ENCODE measurements at regions of chr14 and their contacts with region 1.

Region 1: GRCh38 chr14:75109877-75110276 is 17.0 kb downstream of the NEK9 start:
- DNase-seq: no peak
- ATAC-seq: no peak
- H3K4me3 ChIP-seq: no peak overlapping the region
- H3K4me3 Mint-ChIP-seq: no peak overlapping the region
- H3K27ac ChIP-seq: no peak overlapping the region
- H3K27ac Mint-ChIP-seq: no peak overlapping the region
- H3K4me1 ChIP-seq: peaks cover 8% of the 10 kb centered on the region
- H3K4me1 Mint-ChIP-seq: peaks cover 13% of the 10 kb centered on the region
- H3K27me3 ChIP-seq: no peaks in the 10 kb centered on the region
- H3K27me3 Mint-ChIP-seq: no peaks in the 10 kb centered on the region
- CTCF ChIP-seq: no peak

Region 2: GRCh38 chr14:74720526-74720925 is 389.4 kb before region 1 on chr14:
- CTCF ChIA-PET with region 1: no interaction called
- POLR2A ChIA-PET with region 1: no interaction called
- intact Hi-C with region 1: no loop called
- DNase-seq: no peak
- ATAC-seq: no peak
- H3K4me3 ChIP-seq: no peak overlapping the region
- H3K4me3 Mint-ChIP-seq: no peak overlapping the region
- H3K27ac ChIP-seq: no peak overlapping the region
- H3K27ac Mint-ChIP-seq: no peak overlapping the region
- H3K4me1 ChIP-seq: no peaks in the 10 kb centered on the region
- H3K4me1 Mint-ChIP-seq: peaks cover 10% of the 10 kb centered on the region
- H3K27me3 ChIP-seq: no peaks in the 10 kb centered on the region
- H3K27me3 Mint-ChIP-seq: no peaks in the 10 kb centered on the region
- CTCF ChIP-seq: no peak

Region 3: GRCh38 chr14:75044322-75044721 is 65.6 kb before region 1 on chr14:
- CTCF ChIA-PET with region 1: no interaction called
- POLR2A ChIA-PET with region 1: no interaction called
- intact Hi-C with region 1: loop called in 1 of 2 experiments (anchors 5 kb)
- DNase-seq: no peak
- ATAC-seq: no peak
- H3K4me3 ChIP-seq: no peak overlapping the region
- H3K4me3 Mint-ChIP-seq: no peak overlapping the region
- H3K27ac ChIP-seq: no peak overlapping the region
- H3K27ac Mint-ChIP-seq: no peak overlapping the region
- H3K4me1 ChIP-seq: peaks cover 7% of the 10 kb centered on the region
- H3K4me1 Mint-ChIP-seq: peaks cover 44% of the 10 kb centered on the region
- H3K27me3 ChIP-seq: no peaks in the 10 kb centered on the region
- H3K27me3 Mint-ChIP-seq: no peaks in the 10 kb centered on the region
- CTCF ChIP-seq: no peak

Region 4: GRCh38 chr14:75522224-75522982 is 412.5 kb after region 1 on chr14 and contains the start of gene BATF:
- CTCF ChIA-PET with region 1: no interaction called
- POLR2A ChIA-PET with region 1: no interaction called
- intact Hi-C with region 1: no loop called
- DNase-seq: peak; percentile 37 to 90 (median 73)
- ATAC-seq: peak; percentile 77
- H3K4me3 ChIP-seq: peak within 1 kb of the TSS; percentile 75 to 79
- H3K4me3 Mint-ChIP-seq: peak within 1 kb of the TSS; percentile 98
- H3K27ac ChIP-seq: peak within 1 kb of the TSS; percentile 46 to 93
- H3K27ac Mint-ChIP-seq: peak within 1 kb of the TSS; percentile 93
- H3K4me1 ChIP-seq: peaks cover 53% of the 10 kb centered on the region
- H3K4me1 Mint-ChIP-seq: peaks cover 66% of the 10 kb centered on the region
- H3K27me3 ChIP-seq: no peaks in the 10 kb centered on the region
- H3K27me3 Mint-ChIP-seq: no peaks in the 10 kb centered on the region
- CTCF ChIP-seq: no peak
- total RNA-seq, gene BATF: 3.2 to 4.3 TPM